Cardiac septum (tissue), 1 donor: ENCODE measurements at regions of chr2 and their contacts with region 1.

Region 1: DNA sequence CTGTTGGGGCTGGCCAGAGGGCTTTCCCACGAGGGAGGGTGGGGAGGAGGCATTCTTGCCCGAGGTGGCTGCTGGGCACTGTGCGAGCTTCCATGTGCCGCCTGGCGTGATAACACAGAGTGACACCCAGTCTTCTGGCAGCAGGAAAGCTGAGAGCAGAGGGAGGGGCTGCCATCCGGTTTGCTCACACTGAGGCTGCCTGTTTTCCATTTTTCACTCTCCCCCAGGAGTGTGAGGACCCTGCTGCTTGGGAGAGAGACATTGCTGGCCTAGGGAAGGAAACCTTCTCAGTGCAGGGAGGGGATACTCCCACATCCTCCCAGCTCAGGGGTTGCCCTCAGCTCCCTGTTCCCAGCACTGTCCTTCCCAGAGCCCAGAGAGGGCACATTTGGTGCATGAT is 73.1 kb downstream of the INHBB start:
- DNase-seq: peak; percentile 82

Region 2: GRCh38 chr2:120552800-120553481 is 133.9 kb after region 1 on chr2:
- intact Hi-C with region 1: loop called (anchors 5 kb)
- DNase-seq: peak; percentile 94